PC-3 (cell line): ENCODE measurements at regions of chr4 and their contacts with region 1.

Region 1: GRCh38 chr4:185304944-185305690 is 90.6 kb downstream of the LRP2BP start:
- DNase-seq: peak; percentile 59
- ATAC-seq: peak; percentile 44
- H3K4me3 ChIP-seq: peak overlapping the region; percentile 46
- H3K27ac ChIP-seq: peak overlapping the region; percentile 90
- H3K4me1 ChIP-seq: peaks cover 29% of the 10 kb centered on the region
- H3K27me3 ChIP-seq: no peaks in the 10 kb centered on the region
- CTCF ChIP-seq: peak; percentile 67

Region 2: DNA sequence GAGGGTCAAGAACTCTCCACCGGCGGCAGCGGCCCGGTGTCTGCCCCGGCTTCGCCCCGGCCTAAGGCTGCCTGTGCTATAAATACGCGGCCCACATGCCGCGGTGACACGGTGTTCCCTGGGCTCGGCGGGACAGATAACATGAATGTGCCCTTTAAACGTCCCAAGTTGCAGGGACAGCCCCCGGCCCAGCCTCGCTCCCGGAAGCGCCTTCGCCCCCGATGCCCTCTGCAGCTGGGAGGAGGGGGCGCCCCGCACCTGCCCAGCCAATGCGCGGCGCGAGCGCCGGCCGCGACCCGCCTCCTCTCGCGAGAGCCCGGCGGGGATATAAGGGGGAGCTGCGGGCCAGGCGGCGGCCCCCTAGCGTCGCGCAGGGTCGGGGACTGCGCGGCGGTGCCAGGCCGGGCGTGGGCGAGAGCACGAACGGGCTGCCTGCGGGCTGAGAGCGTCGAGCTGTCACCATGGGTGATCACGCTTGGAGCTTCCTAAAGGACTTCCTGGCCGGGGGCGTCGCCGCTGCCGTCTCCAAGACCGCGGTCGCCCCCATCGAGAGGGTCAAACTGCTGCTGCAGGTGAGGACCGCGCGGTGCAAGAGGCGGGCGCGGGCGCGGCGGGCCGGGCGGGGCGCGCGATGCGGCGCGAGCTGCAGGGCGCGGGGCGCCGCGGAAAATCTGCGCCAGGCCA is 162.1 kb before region 1 on chr4 and contains the start of gene SLC25A4:
- CTCF ChIA-PET with region 1: interaction called, 3 read pairs
- POLR2A ChIA-PET with region 1: no interaction called
- intact Hi-C with region 1: loop called (anchors 2 kb)
- DNase-seq: peak; percentile 76
- ATAC-seq: peak; percentile 93
- H3K4me3 ChIP-seq: peak within 1 kb of the TSS; percentile 83
- H3K27ac ChIP-seq: no peak within 1 kb of the TSS
- H3K4me1 ChIP-seq: peaks cover 13% of the 10 kb centered on the region; the same call in 1 of the 2 replicates
- H3K27me3 ChIP-seq: no peaks in the 10 kb centered on the region
- CTCF ChIP-seq: 0 out of 2 replicates have a peak, but pooled peaks have one; percentile 30
- total RNA-seq, gene SLC25A4: 20.7 and 23.2 TPM in 2 replicates

Region 3: DNA sequence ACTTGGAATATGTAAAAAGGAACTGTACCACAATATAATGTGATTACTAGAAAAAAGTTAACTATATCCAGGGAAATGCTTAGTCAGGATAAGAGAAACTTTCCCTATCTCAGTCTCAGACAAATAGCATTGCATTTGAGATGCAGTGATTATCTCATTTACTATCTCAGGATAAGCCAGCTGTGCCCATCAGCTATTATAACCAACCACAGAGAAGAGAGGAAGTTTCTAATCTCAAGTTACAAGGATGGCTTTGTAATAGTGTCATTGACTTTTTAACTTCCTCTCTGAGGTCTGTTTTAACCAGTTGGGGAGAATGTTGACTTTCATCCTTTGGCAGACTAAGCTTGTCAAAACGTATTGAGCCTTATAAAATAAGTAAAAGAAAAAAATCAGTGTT is 39.2 kb before region 1 on chr4:
- CTCF ChIA-PET with region 1: no interaction called
- POLR2A ChIA-PET with region 1: no interaction called
- intact Hi-C with region 1: loop called (anchors 5 kb)
- DNase-seq: peak; percentile 20
- ATAC-seq: peak; percentile 64
- H3K4me3 ChIP-seq: no peak overlapping the region
- H3K27ac ChIP-seq: no peak overlapping the region
- H3K4me1 ChIP-seq: peaks cover 35% of the 10 kb centered on the region
- H3K27me3 ChIP-seq: no peaks in the 10 kb centered on the region
- CTCF ChIP-seq: no peak

Region 4: DNA sequence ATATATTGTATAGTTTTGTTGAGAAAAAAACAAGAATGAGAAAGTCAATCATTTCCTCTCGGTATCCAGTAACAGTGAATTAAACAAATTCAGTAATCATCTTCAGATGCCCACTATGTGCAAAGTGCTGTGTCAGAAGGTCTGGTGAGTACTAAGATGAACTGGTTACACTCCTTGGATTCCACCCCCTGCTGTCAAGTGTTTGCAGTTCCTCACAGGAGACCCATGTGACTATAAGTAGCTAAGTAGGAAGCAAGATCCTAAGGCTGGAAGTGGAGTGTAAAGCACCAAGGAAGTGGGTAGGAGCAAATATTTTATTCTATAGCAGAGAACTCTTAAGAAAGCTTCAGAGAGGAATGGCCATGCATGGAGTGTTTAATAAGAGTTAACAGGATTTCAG is 22.1 kb before region 1 on chr4:
- CTCF ChIA-PET with region 1: no interaction called
- POLR2A ChIA-PET with region 1: no interaction called
- intact Hi-C with region 1: no loop called
- DNase-seq: peak; percentile 15
- ATAC-seq: peak; percentile 29; the same call in 1 of the 2 replicates
- H3K4me3 ChIP-seq: no peak overlapping the region
- H3K27ac ChIP-seq: no peak overlapping the region
- H3K4me1 ChIP-seq: peaks cover 15% of the 10 kb centered on the region
- H3K27me3 ChIP-seq: no peaks in the 10 kb centered on the region
- CTCF ChIP-seq: no peak

Region 5: DNA sequence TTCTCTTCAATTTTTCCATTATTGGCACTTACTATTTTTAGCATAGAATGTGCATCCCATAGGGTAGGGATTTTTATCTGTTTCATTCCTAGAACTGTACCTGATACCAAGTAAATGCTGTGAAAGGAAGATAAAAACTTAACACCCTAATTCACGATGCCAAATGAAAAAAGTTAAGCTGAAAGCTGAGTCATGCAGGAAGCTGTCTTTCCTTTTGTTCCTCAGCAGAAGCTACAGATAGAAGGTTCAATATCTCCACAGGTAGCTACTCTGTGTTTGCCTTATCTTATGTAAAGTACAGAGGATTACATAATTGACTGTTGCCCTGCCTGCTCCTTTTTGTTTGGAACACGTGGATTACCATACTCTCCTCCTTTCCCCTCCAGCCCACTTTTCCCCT is 13.6 kb after region 1 on chr4:
- CTCF ChIA-PET with region 1: no interaction called
- POLR2A ChIA-PET with region 1: no interaction called
- intact Hi-C with region 1: loop called (anchors 1 kb)
- DNase-seq: peak; percentile 32
- ATAC-seq: no peak; the same call in 1 of the 2 replicates
- H3K4me3 ChIP-seq: no peak overlapping the region
- H3K27ac ChIP-seq: no peak overlapping the region
- H3K4me1 ChIP-seq: peaks cover 9% of the 10 kb centered on the region
- H3K27me3 ChIP-seq: no peaks in the 10 kb centered on the region
- CTCF ChIP-seq: no peak

Region 6: GRCh38 chr4:185346975-185347601 is 42.0 kb after region 1 on chr4:
- CTCF ChIA-PET with region 1: no interaction called
- POLR2A ChIA-PET with region 1: no interaction called
- intact Hi-C with region 1: no loop called
- DNase-seq: no peak
- ATAC-seq: no peak
- H3K4me3 ChIP-seq: no peak overlapping the region
- H3K27ac ChIP-seq: no peak overlapping the region
- H3K4me1 ChIP-seq: no peaks in the 10 kb centered on the region
- H3K27me3 ChIP-seq: no peaks in the 10 kb centered on the region
- CTCF ChIP-seq: no peak

Region 7: DNA sequence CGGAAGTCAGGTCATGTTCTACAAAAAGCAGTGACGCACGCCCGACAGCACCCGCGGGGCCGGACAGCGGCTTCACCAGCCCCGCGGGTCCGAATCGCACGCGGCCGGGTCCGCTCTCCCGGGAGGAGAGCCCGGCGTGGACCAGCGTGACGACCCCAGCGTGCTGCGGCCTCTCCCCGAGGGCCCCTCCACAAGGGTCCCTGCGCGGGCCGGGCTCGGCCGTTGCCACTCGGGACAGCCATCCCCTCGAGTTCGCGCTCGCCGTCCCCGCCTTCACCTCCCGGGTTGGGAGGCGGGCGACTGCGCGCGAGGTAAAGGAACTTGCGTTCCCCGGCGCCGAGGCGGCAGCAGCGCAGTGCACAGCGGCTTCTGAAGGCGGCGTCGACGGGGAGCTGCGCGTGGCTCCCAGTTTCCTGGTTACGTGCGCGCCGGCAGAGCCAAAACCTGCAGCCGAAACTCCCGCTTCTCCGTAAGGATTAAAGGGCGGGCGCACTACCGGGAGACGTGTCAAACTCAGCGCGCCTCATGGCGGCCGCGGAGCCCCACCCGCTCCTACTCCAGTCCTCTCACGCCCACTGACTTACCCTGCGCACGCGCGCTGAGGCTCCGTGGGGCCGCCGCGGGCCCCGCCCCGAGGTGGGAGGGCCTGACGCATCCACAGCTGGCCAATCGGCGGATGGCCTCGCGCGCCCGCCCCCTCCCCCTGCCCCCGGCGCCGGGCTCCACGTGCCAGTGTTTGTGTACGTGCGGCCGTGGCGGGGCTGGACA is 91.0 kb after region 1 on chr4:
- CTCF ChIA-PET with region 1: interaction called, 5 read pairs
- POLR2A ChIA-PET with region 1: interaction called, 12 read pairs
- intact Hi-C with region 1: loop called (anchors 1 kb)
- DNase-seq: peak; percentile 96
- ATAC-seq: peak; percentile 78
- H3K4me3 ChIP-seq: peak overlapping the region; percentile 82
- H3K27ac ChIP-seq: peak overlapping the region; percentile 95
- H3K4me1 ChIP-seq: peaks cover 26% of the 10 kb centered on the region
- H3K27me3 ChIP-seq: no peaks in the 10 kb centered on the region
- CTCF ChIP-seq: no peak

Region 8: DNA sequence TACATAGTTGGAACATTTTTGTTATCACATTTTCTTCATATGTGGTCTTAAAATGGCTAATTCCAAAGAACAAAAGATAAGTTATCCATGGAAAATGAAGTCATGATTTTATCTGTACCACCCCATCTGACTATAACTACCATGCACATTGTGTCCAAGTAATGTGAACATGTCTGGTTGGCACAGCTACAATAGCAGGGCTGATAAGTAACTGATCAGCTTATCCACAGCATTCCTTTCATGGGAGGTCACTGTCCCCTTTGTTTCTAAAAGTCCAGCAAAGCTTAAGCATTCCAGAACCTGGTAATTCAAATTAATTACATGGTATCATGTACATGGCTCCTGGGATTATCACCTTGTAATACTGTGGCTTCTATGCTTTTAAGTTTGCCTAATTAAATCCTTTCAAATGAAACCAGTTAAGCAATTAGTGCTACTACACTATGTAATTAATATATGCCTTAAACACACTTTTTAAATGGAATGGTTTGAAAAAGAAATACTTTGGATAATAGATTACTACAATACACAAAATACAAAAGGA is 528.0 kb after region 1 on chr4:
- CTCF ChIA-PET with region 1: no interaction called
- POLR2A ChIA-PET with region 1: no interaction called
- intact Hi-C with region 1: no loop called
- DNase-seq: no peak
- ATAC-seq: no peak
- H3K4me3 ChIP-seq: no peak overlapping the region
- H3K27ac ChIP-seq: no peak overlapping the region
- H3K4me1 ChIP-seq: 0 out of 2 replicates have a peak, but pooled peaks cover under 1% of the 10 kb centered on the region
- H3K27me3 ChIP-seq: no peaks in the 10 kb centered on the region
- CTCF ChIP-seq: no peak